ENCODE measurements at regions of chr10 and their contacts with region 1.

Region 1: GRCh38 chr10:95561182-95562075 is at the start of gene SORBS1:
- DNase-seq: peak; percentile 98
- ATAC-seq: peak; percentile 99
- total RNA-seq, gene SORBS1: 666 TPM

Region 2: GRCh38 chr10:95295031-95295755 is 266.2 kb before region 1 on chr10:
- intact Hi-C with region 1: no loop called
- DNase-seq: no peak
- ATAC-seq: no peak

Region 3: DNA sequence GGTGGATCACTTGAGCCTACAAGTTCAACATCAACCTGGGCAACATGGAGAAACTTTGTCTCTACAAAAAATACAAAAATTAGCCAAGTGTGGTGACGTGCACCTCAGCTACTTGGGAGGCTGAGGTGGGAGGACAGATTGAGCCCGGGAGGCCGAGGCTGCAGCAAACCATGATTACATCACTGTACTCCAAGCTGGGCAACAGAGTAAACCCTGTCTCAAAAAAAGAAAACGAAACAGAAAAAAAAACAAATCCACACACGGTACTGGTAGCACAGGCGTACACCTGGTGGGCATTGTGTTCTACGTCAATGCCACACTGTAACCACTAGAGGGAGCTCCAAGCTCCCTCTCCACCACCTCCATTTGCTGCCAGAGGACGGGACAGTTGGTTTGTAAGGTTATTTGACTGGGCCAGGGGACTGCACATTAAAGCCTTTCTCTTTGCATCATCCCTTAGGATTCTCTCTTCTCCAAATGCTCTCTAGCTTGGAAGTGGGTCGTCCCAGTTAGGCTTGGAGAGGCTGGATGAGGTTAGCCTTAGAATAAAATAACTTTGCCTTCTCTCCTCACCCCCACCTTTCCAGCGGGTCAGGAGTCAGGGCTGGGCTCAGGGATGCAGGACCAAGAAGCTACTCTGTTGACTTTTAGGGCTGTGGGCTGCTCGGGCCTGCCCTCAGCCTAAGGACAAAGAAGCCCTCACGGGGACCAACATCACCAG is 131.0 kb before region 1 on chr10:
- intact Hi-C with region 1: loop called (anchors 2 kb)
- DNase-seq: no peak
- ATAC-seq: peak; percentile 68

Region 4: DNA sequence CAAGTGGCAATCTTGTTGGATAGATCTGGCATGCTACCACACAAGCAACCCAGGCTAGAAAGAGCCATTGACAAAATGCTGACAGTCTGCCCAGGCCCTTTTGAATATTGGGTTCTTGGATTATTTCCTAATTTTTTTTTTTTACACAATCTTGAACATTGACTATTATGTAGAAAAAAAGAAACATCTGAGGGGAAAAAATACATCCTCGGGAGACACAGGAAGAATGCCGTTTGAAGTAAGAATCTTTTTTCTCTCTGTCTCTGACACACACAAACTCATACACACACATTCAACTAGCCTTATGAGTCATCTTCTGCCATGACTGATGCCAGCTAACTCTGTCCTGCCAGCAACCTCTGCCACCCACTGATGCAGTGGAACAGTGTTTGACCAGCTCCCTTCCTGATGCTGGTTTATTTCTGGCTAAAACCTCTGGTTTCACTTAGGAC is 47.5 kb before region 1 on chr10:
- intact Hi-C with region 1: loop called (anchors 5 kb)
- DNase-seq: no peak
- ATAC-seq: peak; percentile 59

Region 5: GRCh38 chr10:95601116-95601719 is 39.8 kb after region 1 on chr10:
- intact Hi-C with region 1: loop called (anchors 5 kb)
- DNase-seq: no peak
- ATAC-seq: peak; percentile 93

Measured in Right ventricle myocardium inferior (tissue), 1 donor.